Sigmoid colon (tissue), 7 donors: ENCODE measurements at regions of chr17 and their contacts with region 1.

Region 1: GRCh38 chr17:60135151-60135950 is 14.4 kb upstream of the CA4 start:
- DNase-seq: peak; percentile 93
- H3K4me3 ChIP-seq: peak overlapping the region; percentile 49 to 70 (median 59)
- H3K27ac ChIP-seq: peak overlapping the region; percentile 71 to 79 (median 77)
- H3K4me1 ChIP-seq: peaks cover 0 to 34% (median 23%) of the 10 kb centered on the region in 4 donors
- H3K27me3 ChIP-seq: peaks cover 15 to 29% (median 23%) of the 10 kb centered on the region in 3 donors
- CTCF ChIP-seq: no peak
- EP300 ChIP-seq: no peak
- POLR2A ChIP-seq: peak; percentile 14 to 15

Region 2: GRCh38 chr17:60006124-60006523 is 129.2 kb before region 1 on chr17:
- intact Hi-C with region 1: no loop called
- DNase-seq: no peak
- H3K4me3 ChIP-seq: no peak overlapping the region
- H3K27ac ChIP-seq: no peak overlapping the region
- H3K4me1 ChIP-seq: no peaks in the 10 kb centered on the region
- H3K27me3 ChIP-seq: no peaks in the 10 kb centered on the region
- CTCF ChIP-seq: no peak
- EP300 ChIP-seq: no peak
- POLR2A ChIP-seq: no peak

Region 3: DNA sequence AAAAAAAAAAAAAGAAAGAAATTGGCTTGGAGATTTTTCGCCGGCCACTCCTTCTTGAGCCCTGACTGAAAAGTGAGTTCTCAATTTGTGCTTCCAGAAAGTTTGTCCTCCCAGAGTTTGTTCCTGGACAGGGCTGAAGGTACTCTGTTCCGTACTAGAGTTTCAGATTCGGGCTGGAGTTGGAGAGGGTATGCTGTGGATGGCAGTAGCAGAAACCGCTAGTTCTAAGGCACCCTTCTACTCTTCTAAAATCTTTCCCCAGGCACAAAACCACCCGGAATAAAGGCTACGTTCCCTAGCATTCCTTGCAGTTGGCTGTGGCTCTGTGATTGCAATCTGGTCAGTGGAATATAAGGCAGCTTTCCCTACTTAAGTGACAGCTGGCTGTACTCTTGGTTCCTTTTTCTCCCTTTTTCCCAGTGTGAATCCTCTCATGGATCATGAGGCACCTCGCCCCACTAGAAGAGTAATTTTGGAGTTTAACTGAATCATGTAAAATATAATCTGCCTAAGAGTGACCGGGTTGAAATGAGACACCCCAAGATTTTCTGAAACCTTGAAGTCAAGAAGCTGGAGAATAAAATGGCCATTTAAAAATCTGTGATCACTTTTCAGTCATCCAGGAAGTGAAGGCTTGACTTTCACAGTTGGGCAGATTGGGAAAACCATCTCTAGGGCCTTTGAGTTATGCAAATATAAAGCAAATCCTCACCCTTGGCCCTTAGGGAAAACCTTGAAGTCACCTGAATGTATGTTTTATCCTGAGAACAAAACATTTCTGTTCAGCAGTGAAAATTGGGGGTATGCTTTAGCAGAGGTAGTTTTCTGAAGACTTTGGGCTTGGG is 55.7 kb before region 1 on chr17:
- intact Hi-C with region 1: loop called (anchors 10 kb)
- DNase-seq: no peak
- H3K4me3 ChIP-seq: peak overlapping the region; percentile 53 to 85 (median 75)
- H3K27ac ChIP-seq: peak overlapping the region; percentile 80 to 90 (median 86)
- H3K4me1 ChIP-seq: peaks cover 0 to 24% (median 16%) of the 10 kb centered on the region in 4 donors
- H3K27me3 ChIP-seq: no peaks in the 10 kb centered on the region
- CTCF ChIP-seq: no peak
- EP300 ChIP-seq: no peak
- POLR2A ChIP-seq: no peak

Region 4: DNA sequence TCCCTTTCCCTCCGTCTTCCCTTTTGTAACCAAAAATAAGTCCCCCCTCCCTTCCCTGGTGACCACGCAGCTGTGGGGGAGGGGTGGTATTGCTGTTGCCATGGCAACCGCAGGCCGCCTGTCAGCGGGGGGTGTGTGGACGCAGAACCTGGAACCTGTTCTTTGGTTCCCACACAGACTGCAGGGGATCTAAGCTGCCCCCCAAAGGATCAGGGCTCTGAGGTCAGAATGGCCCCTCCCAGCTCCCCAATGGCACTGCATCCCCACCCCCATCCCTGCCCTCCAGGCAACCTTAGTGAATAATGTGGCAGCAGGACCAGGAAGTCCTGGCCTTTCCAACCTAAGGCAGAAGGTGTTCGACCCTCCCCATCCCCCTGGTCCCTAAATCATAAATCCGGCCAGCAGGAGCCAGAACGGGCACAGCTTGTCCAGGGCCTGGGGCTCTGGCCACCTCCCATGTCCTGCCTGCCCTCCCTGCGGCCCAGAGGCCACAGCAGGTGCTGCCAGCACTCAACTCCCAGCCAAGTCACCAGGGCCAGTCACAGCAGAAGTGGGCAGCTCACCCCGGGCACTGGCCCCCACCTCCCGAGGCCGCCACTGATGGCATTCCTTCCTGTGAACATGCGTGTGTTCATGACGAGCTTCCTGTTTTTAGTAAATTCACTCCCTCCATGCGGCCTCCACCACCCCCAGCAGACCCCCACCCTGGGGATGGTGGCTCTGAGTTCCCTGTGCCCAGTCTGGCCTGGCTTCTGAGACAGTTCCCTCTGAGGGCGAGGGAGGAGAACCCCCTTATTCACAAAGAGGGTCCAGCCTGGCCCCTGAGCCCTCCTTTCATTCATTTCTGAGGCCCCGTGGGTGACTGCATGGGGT is 26.6 kb after region 1 on chr17:
- intact Hi-C with region 1: no loop called
- DNase-seq: no peak
- H3K4me3 ChIP-seq: no peak overlapping the region
- H3K27ac ChIP-seq: no peak overlapping the region
- H3K4me1 ChIP-seq: no peaks in the 10 kb centered on the region
- H3K27me3 ChIP-seq: peaks cover 0 to 67% (median 35%) of the 10 kb centered on the region in 3 donors
- CTCF ChIP-seq: no peak
- EP300 ChIP-seq: no peak
- POLR2A ChIP-seq: no peak

Region 5: DNA sequence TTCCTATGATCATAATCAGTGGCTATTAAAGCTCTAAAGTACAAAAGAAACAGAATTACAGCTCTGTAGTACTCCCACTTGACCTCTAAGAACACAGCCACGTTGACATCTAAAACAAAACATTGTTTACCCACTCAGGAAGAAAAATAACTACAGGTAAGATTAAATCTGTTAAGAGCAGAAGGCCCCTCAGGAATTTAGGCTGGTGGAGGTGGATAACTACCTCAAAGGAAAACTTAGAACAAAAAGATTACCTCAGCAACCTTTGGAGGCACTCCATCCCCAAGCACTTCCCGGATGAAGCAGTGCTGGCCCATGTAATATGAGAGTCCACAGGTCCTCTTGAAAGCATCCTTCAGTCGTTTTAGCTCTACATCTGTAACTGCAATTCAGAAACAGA is 209.9 kb after region 1 on chr17:
- intact Hi-C with region 1: no loop called
- DNase-seq: no peak
- H3K4me3 ChIP-seq: no peak overlapping the region
- H3K27ac ChIP-seq: no peak overlapping the region
- H3K4me1 ChIP-seq: no peaks in the 10 kb centered on the region
- H3K27me3 ChIP-seq: no peaks in the 10 kb centered on the region
- CTCF ChIP-seq: no peak
- EP300 ChIP-seq: no peak
- POLR2A ChIP-seq: no peak